Aorta (tissue), 5 donors: ENCODE measurements at regions of chr4 and their contacts with region 1.

Region 1: GRCh38 chr4:102174800-102175199 is 170.5 kb downstream of the SLC39A8 start:
- DNase-seq: no peak
- ATAC-seq: peak; percentile 45
- H3K4me3 ChIP-seq: no peak overlapping the region
- H3K27ac ChIP-seq: peak overlapping the region; percentile 74 to 93
- H3K4me1 ChIP-seq: peaks cover 0 to 3% of the 10 kb centered on the region in 2 donors
- H3K27me3 ChIP-seq: no peaks in the 10 kb centered on the region

Region 2: GRCh38 chr4:102007959-102008425 is 166.8 kb before region 1 on chr4:
- intact Hi-C with region 1: no loop called
- DNase-seq: no peak
- ATAC-seq: no peak
- H3K4me3 ChIP-seq: no peak overlapping the region
- H3K27ac ChIP-seq: no peak overlapping the region
- H3K4me1 ChIP-seq: no peaks in the 10 kb centered on the region
- H3K27me3 ChIP-seq: no peaks in the 10 kb centered on the region

Region 3: DNA sequence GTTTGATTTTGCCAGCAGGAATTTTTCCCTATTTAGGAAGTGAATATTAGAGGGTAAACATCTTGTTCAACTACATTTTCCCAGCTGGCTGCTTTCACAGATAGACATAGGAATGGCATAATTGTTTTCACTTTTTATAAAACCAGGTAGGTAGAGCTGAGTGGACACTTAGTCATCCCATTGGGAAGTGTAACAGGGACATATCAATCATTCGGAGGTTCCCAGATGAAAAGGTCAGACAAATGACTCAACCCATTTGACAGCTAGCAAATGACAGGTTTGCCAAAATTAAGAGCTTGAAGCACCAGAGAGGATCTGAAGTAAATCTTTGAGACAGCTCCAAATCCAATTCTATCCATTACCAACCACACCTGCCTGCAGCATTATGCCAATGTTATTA is 34.9 kb before region 1 on chr4:
- intact Hi-C with region 1: loop called in 1 of 2 experiments (anchors 5 kb)
- DNase-seq: no peak
- ATAC-seq: no peak
- H3K4me3 ChIP-seq: no peak overlapping the region
- H3K27ac ChIP-seq: no peak overlapping the region
- H3K4me1 ChIP-seq: peaks cover 4 to 11% of the 10 kb centered on the region in 2 donors
- H3K27me3 ChIP-seq: no peaks in the 10 kb centered on the region

Region 4: DNA sequence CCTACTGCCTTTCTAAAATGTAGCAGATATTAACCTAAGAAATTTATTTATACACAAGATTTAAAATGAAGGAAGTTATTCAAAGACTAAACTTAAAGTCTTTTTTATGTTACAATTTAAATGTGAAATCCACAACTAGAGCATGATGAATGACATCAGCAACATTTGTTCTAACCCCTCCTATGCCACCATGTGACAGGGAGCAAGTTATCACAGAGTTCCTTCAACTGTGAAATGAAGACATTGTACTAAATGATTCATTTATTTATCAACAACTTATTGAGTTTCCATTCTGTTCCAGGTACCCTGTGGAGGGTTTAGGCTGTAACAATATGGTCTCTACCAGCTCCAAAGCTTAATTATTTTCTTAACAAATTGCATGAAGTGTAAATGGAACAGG is 93.6 kb after region 1 on chr4:
- intact Hi-C with region 1: no loop called
- DNase-seq: no peak
- ATAC-seq: no peak
- H3K4me3 ChIP-seq: no peak overlapping the region
- H3K27ac ChIP-seq: no peak overlapping the region
- H3K4me1 ChIP-seq: no peaks in the 10 kb centered on the region
- H3K27me3 ChIP-seq: no peaks in the 10 kb centered on the region